ENCODE measurements at regions of chr15 and their contacts with region 1.

Region 1: GRCh38 chr15:65792130-65792987 is at the start of gene DENND4A:
- DNase-seq: peak; percentile 97 to 100 (median 98)
- ATAC-seq: peak; percentile 79
- H3K4me3 ChIP-seq: peak within 1 kb of the TSS; percentile 96
- H3K4me3 Mint-ChIP-seq: peak within 1 kb of the TSS; percentile 90
- H3K27ac ChIP-seq: peak within 1 kb of the TSS; percentile 99
- H3K27ac Mint-ChIP-seq: peak within 1 kb of the TSS; percentile 99
- H3K4me1 ChIP-seq: peaks cover 28% of the 10 kb centered on the region
- H3K4me1 Mint-ChIP-seq: peaks cover 64% of the 10 kb centered on the region
- H3K27me3 ChIP-seq: no peaks in the 10 kb centered on the region
- H3K27me3 Mint-ChIP-seq: no peaks in the 10 kb centered on the region
- CTCF ChIP-seq: no peak
- total RNA-seq, gene DENND4A: 64.1 to 69.6 TPM

Region 2: DNA sequence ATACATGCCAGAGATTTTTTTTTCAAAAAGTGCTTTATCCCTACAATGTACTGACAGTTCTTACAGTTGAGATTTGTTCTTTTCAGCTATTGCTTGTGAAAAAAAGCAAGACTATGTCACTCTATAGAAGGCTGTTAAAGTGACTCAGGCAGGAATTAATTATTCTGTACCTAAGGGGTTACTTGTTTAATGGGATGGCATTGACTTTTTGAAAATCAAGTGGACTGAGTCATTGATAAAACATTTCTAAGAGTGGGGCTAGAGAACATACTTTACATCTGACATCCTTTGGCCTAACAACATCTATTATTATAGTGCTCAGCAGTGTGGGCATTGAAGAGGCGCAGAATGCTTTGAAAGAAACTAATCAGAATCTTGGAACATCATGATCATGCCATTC is 215.7 kb before region 1 on chr15:
- CTCF ChIA-PET with region 1: no interaction called
- POLR2A ChIA-PET with region 1: no interaction called
- intact Hi-C with region 1: no loop called
- DNase-seq: no peak
- ATAC-seq: no peak
- H3K4me3 ChIP-seq: no peak overlapping the region
- H3K4me3 Mint-ChIP-seq: no peak overlapping the region
- H3K27ac ChIP-seq: no peak overlapping the region
- H3K27ac Mint-ChIP-seq: peak overlapping the region; percentile 68
- H3K4me1 ChIP-seq: no peaks in the 10 kb centered on the region
- H3K4me1 Mint-ChIP-seq: no peaks in the 10 kb centered on the region
- H3K27me3 ChIP-seq: no peaks in the 10 kb centered on the region
- H3K27me3 Mint-ChIP-seq: no peaks in the 10 kb centered on the region
- CTCF ChIP-seq: no peak

Region 3: DNA sequence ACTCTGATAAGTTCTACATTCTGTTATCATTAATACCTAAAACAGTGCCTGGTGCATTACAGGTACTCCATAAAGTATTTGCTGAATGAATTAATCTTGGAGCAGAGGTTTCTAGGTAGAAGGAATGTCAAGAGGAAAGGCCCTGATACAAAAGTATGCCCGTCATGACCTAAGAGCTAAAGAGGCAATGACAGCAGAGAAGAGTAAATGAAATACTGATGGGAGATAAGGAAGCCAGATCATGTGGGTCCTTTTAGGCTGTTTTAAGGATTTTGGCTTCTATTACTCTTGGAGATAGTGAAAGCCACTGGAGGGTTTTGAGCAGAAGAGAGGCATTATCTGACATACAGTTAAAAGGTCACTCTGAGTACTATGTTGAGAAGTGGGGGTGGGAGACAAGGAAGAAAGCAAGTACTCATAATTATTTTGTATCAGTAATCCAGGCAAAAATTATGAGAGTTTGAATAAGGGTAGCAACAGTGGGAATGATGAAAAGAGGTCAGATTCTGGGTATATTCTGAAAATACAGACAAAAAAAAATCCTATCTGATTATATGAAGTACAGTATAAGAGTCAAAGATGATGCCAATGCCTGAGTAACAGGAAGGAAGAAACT is 48.6 kb before region 1 on chr15:
- CTCF ChIA-PET with region 1: interaction called, 4 read pairs
- POLR2A ChIA-PET with region 1: interaction called, 7 read pairs
- intact Hi-C with region 1: loop called in 1 of 2 experiments (anchors 5 kb)
- DNase-seq: no peak
- ATAC-seq: no peak
- H3K4me3 ChIP-seq: no peak overlapping the region
- H3K4me3 Mint-ChIP-seq: no peak overlapping the region
- H3K27ac ChIP-seq: no peak overlapping the region
- H3K27ac Mint-ChIP-seq: no peak overlapping the region
- H3K4me1 ChIP-seq: no peaks in the 10 kb centered on the region
- H3K4me1 Mint-ChIP-seq: peaks cover 11% of the 10 kb centered on the region
- H3K27me3 ChIP-seq: no peaks in the 10 kb centered on the region
- H3K27me3 Mint-ChIP-seq: no peaks in the 10 kb centered on the region
- CTCF ChIP-seq: no peak

Region 4: DNA sequence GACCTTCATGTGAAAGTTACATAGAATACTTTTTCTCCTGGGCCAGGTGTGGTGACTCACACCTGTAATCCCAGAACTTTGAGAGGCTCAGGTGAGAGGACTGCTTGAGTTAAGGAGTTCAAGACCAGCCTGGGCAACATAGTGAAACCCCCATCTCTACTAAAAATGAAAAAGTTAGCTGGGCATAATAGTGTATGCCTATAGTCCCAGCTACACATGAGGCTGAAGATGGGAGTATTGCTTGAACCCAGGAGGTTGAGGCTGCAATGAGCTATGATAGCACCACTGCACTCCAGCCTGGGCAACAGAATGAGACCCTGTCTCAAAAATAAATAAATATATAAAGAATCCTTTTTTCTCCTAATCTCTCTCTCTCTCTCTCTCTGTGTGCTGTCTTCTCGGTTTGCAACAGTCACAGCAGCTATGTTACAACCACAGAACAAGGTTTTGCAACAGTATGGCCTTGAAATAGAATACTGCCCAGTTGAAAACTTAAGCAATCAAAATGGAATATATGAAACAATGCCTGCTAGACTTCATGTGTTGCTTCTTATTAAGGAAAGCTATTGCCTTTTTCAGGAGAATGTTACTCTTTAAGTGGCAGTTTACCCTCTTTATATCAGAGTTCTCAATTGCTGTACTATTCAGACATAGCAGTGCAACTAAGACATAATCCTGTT is 12.0 kb after region 1 on chr15:
- CTCF ChIA-PET with region 1: interaction called, 4 read pairs
- POLR2A ChIA-PET with region 1: interaction called, 31 read pairs
- intact Hi-C with region 1: no loop called
- DNase-seq: no peak
- ATAC-seq: no peak
- H3K4me3 ChIP-seq: no peak overlapping the region
- H3K4me3 Mint-ChIP-seq: no peak overlapping the region
- H3K27ac ChIP-seq: peak overlapping the region in 1 of 2 donors; percentile 13
- H3K27ac Mint-ChIP-seq: peak overlapping the region; percentile 54
- H3K4me1 ChIP-seq: peaks cover 19% of the 10 kb centered on the region
- H3K4me1 Mint-ChIP-seq: peaks cover 37% of the 10 kb centered on the region
- H3K27me3 ChIP-seq: no peaks in the 10 kb centered on the region
- H3K27me3 Mint-ChIP-seq: no peaks in the 10 kb centered on the region
- CTCF ChIP-seq: no peak

Region 5: DNA sequence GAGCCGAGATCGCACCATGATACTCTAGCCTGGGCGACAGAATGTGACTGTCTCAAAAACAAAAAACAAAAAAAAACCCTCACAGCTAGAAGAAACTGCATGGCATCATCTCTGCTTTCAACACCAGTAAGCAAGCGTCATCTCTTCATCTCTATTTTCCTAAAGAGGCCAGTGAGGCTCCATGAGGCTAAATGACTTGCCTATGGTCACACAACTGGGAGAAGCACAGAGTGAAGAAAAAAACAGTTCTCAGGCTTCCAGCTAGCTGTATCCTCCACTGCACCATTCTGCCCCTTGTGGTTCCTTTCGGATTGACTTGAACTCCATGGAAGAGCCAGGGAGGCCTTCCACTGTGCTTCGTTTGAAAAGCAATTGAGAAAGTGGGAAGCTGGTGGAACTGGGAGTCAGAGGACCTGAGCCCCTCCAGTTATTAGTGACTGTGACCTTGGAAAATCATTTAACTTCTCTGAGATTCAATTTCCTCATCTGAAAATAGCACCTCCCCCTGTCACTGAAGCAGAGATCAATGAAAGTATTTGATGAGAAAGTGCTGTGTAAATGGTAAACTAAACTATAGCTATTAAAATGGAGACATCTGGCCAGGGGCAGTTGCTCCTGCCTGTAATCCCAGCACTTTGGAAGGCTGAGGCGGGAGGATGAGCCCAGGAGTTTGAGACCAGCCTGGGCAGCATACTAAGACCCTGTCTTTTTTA is 31.8 kb after region 1 on chr15:
- CTCF ChIA-PET with region 1: interaction called, 8 read pairs
- POLR2A ChIA-PET with region 1: interaction called, 93 read pairs
- intact Hi-C with region 1: loop called in 1 of 2 experiments (anchors 1 kb)
- DNase-seq: peak in 4 of 14 experiments; percentile 14 to 59 (median 42)
- ATAC-seq: no peak
- H3K4me3 ChIP-seq: no peak overlapping the region
- H3K4me3 Mint-ChIP-seq: no peak overlapping the region
- H3K27ac ChIP-seq: no peak overlapping the region
- H3K27ac Mint-ChIP-seq: peak overlapping the region; percentile 66
- H3K4me1 ChIP-seq: peaks cover 62% of the 10 kb centered on the region
- H3K4me1 Mint-ChIP-seq: peaks cover 71% of the 10 kb centered on the region
- H3K27me3 ChIP-seq: no peaks in the 10 kb centered on the region
- H3K27me3 Mint-ChIP-seq: no peaks in the 10 kb centered on the region
- CTCF ChIP-seq: peak; percentile 21

Region 6: GRCh38 chr15:65856821-65857455 is 64.6 kb after region 1 on chr15:
- CTCF ChIA-PET with region 1: interaction called, 4 read pairs
- POLR2A ChIA-PET with region 1: interaction called, 9 read pairs
- intact Hi-C with region 1: loop called in 1 of 2 experiments (anchors 1 kb)
- DNase-seq: peak; percentile 73 to 91 (median 80)
- ATAC-seq: peak; percentile 94
- H3K4me3 ChIP-seq: no peak overlapping the region
- H3K4me3 Mint-ChIP-seq: no peak overlapping the region
- H3K27ac ChIP-seq: no peak overlapping the region
- H3K27ac Mint-ChIP-seq: no peak overlapping the region
- H3K4me1 ChIP-seq: no peaks in the 10 kb centered on the region
- H3K4me1 Mint-ChIP-seq: peaks cover 6% of the 10 kb centered on the region
- H3K27me3 ChIP-seq: no peaks in the 10 kb centered on the region
- H3K27me3 Mint-ChIP-seq: no peaks in the 10 kb centered on the region
- CTCF ChIP-seq: peak; percentile 92

Measured in CD4-positive, alpha-beta T cell (primary cell).